Mammary epithelial cell (primary cell): ENCODE measurements at regions of chr13 and their contacts with region 1.

Region 1: DNA sequence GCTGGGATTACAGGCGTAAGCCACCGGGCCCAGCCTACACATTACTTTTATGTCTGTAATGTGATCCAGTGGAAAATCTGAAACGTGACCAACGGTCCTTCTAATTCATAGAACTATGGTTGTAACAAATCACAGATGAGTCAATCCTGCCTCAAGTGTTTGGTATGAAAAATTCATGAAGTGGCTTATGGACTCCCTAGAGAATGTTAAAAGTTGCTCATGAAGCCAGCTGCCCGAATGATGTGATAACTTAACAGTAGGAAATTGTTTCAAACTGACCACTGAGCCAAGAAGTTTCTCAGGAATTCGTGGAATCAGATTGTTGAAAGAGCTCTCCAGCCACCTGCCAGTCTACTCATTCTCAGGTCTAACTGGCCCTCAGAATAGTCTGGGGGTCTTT is 59.4 kb upstream of the FARP1 start:
- DNase-seq: peak; percentile 62
- H3K4me3 ChIP-seq: no peak overlapping the region
- H3K27ac ChIP-seq: no peak overlapping the region
- H3K4me1 ChIP-seq: no peaks in the 10 kb centered on the region
- H3K27me3 ChIP-seq: no peaks in the 10 kb centered on the region
- CTCF ChIP-seq: no peak

Region 2: DNA sequence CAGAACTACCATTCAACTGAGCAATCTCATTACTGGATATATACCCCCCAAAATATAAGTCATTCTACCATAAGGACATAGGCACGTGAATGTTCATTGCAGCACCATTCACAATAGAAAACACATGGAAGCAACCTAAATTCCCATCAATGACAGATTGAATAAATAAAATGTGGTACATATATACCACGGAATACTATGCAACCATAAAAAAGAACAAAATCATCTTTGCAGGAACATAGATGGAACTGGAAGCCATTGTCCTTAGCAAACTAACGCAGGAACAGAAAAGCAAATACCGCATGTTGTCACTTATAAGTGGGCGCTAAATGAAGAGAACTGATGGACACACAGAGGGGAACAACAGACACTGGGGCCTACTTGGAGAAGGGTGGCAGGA is 79.4 kb after region 1 on chr13:
- CTCF ChIA-PET with region 1: no interaction called
- dilution Hi-C with region 1: no loop called
- in situ Hi-C with region 1: no loop called
- intact Hi-C with region 1: no loop called
- DNase-seq: no peak
- H3K4me3 ChIP-seq: no peak overlapping the region
- H3K27ac ChIP-seq: no peak overlapping the region
- H3K4me1 ChIP-seq: no peaks in the 10 kb centered on the region
- H3K27me3 ChIP-seq: no peaks in the 10 kb centered on the region
- CTCF ChIP-seq: no peak

Region 3: DNA sequence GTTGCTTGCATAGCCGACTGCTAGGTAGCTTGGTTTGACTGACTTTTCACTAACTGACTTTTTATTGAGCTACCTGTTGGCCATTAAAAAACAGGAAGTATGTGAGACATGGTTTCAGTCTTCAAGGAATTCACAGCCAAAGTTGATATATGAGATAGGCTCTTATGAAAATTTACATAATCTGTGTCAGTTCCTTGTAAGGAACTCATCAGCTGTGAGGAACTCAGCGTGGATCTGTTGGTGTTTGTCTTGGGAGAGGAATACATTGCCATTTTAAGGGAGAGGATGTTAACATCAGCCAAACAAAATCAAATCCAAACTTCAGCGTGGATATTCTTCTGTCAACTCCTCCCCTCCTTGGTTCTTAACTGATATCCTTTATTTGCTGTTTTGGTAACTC is 91.5 kb after region 1 on chr13:
- CTCF ChIA-PET with region 1: no interaction called
- dilution Hi-C with region 1: loop called (anchors 5 kb)
- in situ Hi-C with region 1: no loop called
- intact Hi-C with region 1: no loop called
- DNase-seq: no peak
- H3K4me3 ChIP-seq: no peak overlapping the region
- H3K27ac ChIP-seq: no peak overlapping the region
- H3K4me1 ChIP-seq: peaks cover 17% of the 10 kb centered on the region
- H3K27me3 ChIP-seq: no peaks in the 10 kb centered on the region
- CTCF ChIP-seq: no peak

Region 4: GRCh38 chr13:98349731-98350305 is 266.3 kb after region 1 on chr13:
- CTCF ChIA-PET with region 1: no interaction called
- dilution Hi-C with region 1: no loop called
- in situ Hi-C with region 1: no loop called
- intact Hi-C with region 1: no loop called
- DNase-seq: no peak
- H3K4me3 ChIP-seq: no peak overlapping the region
- H3K27ac ChIP-seq: no peak overlapping the region
- H3K4me1 ChIP-seq: no peaks in the 10 kb centered on the region
- H3K27me3 ChIP-seq: no peaks in the 10 kb centered on the region
- CTCF ChIP-seq: no peak